Calu3 (cell line): ENCODE measurements at regions of chr1 and their contacts with region 1.

Region 1: DNA sequence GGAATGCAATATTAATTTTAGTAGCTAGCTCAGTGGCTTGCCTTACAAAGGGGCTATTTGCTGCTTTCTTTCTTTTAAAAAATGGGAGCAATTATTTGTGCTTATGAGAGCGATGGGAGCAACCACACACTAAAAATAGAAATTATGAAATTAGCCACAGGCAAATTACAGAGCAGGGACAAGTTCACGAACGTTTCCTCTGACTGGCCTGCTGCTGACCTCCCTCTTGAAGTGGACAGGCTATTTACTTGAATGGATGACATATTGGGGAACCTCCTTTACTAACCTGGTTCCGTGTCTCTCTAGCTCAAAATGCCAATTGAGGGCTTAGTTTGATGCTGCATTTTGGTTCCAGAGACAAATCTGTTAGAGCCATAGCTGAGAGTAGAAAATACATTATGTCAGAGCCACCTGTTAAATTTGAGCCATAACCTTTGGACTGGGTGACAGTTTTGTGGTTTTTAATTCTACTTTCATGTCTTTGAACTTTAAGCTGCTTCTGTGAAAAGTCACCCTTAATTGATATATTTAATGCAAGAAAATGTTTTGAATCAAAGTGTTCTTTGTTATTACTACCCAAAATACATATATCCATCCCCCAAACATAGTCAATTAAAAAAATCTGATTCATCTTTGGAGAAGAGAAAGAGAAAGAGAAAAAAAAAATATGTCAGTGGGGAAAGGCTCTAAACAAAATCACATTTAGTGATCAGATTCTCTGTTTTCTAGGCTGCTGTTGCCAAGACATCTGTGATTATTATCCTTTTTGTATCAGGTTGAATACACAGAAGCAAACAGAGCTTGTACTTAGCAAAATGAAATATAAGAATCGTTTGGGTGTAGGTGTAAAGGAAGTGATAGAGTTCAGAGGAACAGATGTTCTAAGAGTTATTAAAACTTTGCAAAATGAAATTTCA is 351.9 kb downstream of the ADGRL2 start:
- DNase-seq: no peak
- H3K4me3 Mint-ChIP-seq: no peak overlapping the region
- H3K27ac Mint-ChIP-seq: no peak overlapping the region
- H3K4me1 Mint-ChIP-seq: peaks cover 26% of the 10 kb centered on the region
- H3K27me3 Mint-ChIP-seq: no peaks in the 10 kb centered on the region
- CTCF ChIP-seq: no peak

Region 2: GRCh38 chr1:82197606-82198005 is 45.0 kb after region 1 on chr1:
- CTCF ChIA-PET with region 1: no interaction called
- intact Hi-C with region 1: loop called (anchors 1 kb)
- DNase-seq: no peak
- H3K4me3 Mint-ChIP-seq: no peak overlapping the region
- H3K27ac Mint-ChIP-seq: no peak overlapping the region
- H3K4me1 Mint-ChIP-seq: no peaks in the 10 kb centered on the region
- H3K27me3 Mint-ChIP-seq: no peaks in the 10 kb centered on the region
- CTCF ChIP-seq: no peak